GM13976 (cell line): ENCODE measurements at regions of chr4 and their contacts with region 1.

Region 1: GRCh38 chr4:17544205-17544604 is 29.2 kb downstream of the CLRN2 start:
- DNase-seq: no peak
- CTCF ChIP-seq: no peak

Region 2: DNA sequence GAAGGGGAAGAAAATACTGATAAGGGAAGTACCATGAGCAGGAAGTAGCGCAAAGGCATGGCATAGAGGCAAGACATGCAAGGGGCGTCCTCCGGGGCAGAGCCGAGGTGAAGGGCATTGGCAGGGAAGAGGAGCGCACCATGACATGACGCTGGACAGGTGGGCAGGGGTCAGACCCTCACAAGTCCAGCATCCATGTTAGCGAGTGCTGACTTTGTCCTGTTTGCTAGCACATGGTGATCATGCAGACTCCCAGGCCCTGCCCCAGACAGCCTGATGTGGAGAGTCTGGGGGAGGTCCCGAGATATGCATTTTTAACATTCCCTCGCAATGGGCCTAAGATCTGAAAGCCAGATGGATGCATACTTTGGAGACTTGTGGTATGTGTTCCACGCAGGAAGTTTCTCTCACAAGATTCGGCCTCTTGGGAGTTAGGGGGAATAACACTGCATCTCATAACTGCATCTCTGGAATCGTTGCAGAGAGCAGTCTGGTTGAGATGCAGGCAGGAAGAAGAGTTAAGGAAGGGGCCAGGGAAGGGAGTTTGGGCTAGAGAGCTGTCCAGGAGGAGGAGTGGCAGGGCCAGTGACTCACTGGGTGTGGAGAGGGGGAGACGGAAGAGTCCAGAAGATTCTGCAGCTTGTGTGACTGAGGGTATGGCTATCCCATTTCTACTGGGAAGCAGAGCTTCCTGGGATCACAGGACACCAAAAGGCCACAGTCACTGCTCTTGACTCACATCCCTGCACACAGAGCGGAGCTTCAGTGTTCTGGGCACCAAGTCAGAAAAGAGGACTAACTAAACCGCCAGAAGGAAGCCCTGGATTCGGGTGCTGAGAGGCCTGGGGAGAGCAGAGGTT is 177.5 kb after region 1 on chr4:
- in situ Hi-C with region 1: no loop called
- DNase-seq: no peak
- CTCF ChIP-seq: no peak

Region 3: GRCh38 chr4:18342847-18343246 is 798.6 kb after region 1 on chr4:
- in situ Hi-C with region 1: no loop called
- DNase-seq: no peak
- CTCF ChIP-seq: no peak

Region 4: GRCh38 chr4:18593445-18594002 is 1049.3 kb after region 1 on chr4:
- in situ Hi-C with region 1: loop called (anchors 25 kb)
- DNase-seq: peak; percentile 65
- CTCF ChIP-seq: peak; percentile 65